ENCODE measurements at regions of chr3 and their contacts with region 1.

Region 1: DNA sequence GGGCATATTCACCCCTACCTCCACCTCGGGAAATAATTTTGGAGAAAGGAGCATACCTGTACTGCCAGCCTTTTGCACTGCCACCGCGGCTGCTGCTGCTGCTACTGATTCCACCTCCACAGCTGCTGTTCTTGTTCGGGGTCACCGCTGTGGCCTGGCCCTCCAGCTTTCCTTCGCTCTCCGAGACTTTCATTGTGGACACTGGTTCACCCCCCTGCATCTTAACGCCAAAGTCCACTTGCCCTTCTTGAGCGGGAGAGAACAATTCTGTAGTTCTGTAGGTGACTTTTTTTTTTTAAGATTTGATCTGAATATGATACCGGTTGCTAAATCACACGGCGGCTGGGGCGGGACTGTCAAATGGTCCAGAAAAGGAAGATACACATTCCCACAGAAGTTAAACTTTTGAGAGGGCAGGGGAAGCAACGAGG is 701 bp downstream of the OSBPL11 start:
- DNase-seq: peak; percentile 10
- H3K4me3 ChIP-seq: peak overlapping the region; percentile 94
- H3K27ac ChIP-seq: peak overlapping the region; percentile 79
- H3K4me1 ChIP-seq: peaks cover 39% of the 10 kb centered on the region
- CTCF ChIP-seq: no peak

Region 2: GRCh38 chr3:125055913-125056745 is 538.5 kb before region 1 on chr3 and contains the start of gene HEG1:
- CTCF ChIA-PET with region 1: no interaction called
- POLR2A ChIA-PET with region 1: no interaction called
- intact Hi-C with region 1: loop called (anchors 10 kb)
- DNase-seq: peak; percentile 58
- H3K4me3 ChIP-seq: peak within 1 kb of the TSS; percentile 80
- H3K27ac ChIP-seq: no peak within 1 kb of the TSS
- H3K4me1 ChIP-seq: peaks cover 20% of the 10 kb centered on the region
- CTCF ChIP-seq: no peak
- total RNA-seq, gene HEG1: 2.4 and 5.7 TPM in 2 replicates

Region 3: GRCh38 chr3:125350597-125350996 is 244.0 kb before region 1 on chr3:
- CTCF ChIA-PET with region 1: no interaction called
- POLR2A ChIA-PET with region 1: no interaction called
- intact Hi-C with region 1: no loop called
- DNase-seq: no peak
- H3K4me3 ChIP-seq: no peak overlapping the region
- H3K27ac ChIP-seq: no peak overlapping the region
- H3K4me1 ChIP-seq: peaks cover 26% of the 10 kb centered on the region
- CTCF ChIP-seq: no peak

Region 4: GRCh38 chr3:125437631-125438435 is 156.8 kb before region 1 on chr3:
- CTCF ChIA-PET with region 1: interaction called, 14 read pairs
- POLR2A ChIA-PET with region 1: interaction called, 3 read pairs
- intact Hi-C with region 1: no loop called
- DNase-seq: peak; percentile 47
- H3K4me3 ChIP-seq: no peak overlapping the region
- H3K27ac ChIP-seq: no peak overlapping the region
- H3K4me1 ChIP-seq: no peaks in the 10 kb centered on the region
- CTCF ChIP-seq: peak; percentile 99

Region 5: GRCh38 chr3:125512135-125512920 is 82.3 kb before region 1 on chr3:
- CTCF ChIA-PET with region 1: no interaction called
- POLR2A ChIA-PET with region 1: no interaction called
- intact Hi-C with region 1: no loop called
- DNase-seq: no peak
- H3K4me3 ChIP-seq: no peak overlapping the region
- H3K27ac ChIP-seq: no peak overlapping the region
- H3K4me1 ChIP-seq: peaks cover 15% of the 10 kb centered on the region
- CTCF ChIP-seq: no peak

Region 6: GRCh38 chr3:126083913-126084767 is 489.5 kb after region 1 on chr3 and contains the start of gene SLC41A3:
- CTCF ChIA-PET with region 1: no interaction called
- POLR2A ChIA-PET with region 1: no interaction called
- intact Hi-C with region 1: loop called (anchors 5 kb)
- DNase-seq: peak; percentile 90
- H3K4me3 ChIP-seq: peak within 1 kb of the TSS; percentile 89
- H3K27ac ChIP-seq: peak within 1 kb of the TSS; percentile 62
- H3K4me1 ChIP-seq: peaks cover 7% of the 10 kb centered on the region
- CTCF ChIP-seq: peak; percentile 74
- total RNA-seq, gene SLC41A3: 26.6 and 35.9 TPM in 2 replicates

Measured in OCI-LY7 (cell line).